ENCODE measurements at regions of chr2 and their contacts with region 1.

Region 1: DNA sequence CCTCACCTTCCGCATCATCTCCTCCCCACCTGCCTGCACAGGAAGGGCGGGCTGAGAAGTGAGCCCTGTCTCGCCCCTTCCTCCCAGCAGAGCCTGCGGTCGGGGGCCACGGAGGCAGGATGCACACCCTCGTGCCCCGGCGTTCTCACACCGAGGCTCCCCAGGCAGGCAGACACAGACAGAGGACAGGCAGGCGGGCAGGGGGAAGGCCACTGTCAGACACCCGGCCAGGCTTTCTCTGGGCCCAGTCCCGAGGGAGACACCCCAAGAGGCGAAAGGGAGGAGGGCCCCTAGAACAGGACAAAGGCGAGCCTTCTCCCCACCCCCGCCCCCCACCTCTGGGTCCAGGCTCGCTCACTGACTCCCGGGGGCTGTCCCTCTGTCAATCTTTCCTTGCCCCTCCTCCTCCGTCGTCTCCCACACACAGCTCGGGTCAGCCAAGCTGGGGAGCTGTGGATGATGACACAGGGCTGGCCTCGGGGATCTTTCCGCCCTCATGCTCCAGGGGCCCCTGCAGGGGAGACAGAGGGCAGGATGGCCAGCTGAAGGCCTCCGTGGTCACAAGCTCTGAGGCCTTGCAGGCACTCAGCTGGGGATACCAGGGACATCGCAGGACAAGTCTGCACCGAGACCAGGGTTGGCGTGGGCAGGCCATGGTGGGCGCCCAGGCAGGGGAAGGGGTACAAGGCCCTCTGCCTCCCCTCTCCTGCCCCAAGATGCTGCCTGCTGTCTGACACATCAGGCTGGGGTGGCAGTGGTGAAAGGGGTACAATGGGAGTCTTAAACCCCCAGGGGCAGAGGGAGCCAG is 24.9 kb downstream of the BIN1 start:
- DNase-seq: peak; percentile 87
- ATAC-seq: peak; percentile 50
- H3K4me3 Mint-ChIP-seq: peak overlapping the region; percentile 82
- H3K27ac Mint-ChIP-seq: peak overlapping the region; percentile 91
- H3K4me1 Mint-ChIP-seq: peaks cover 75% of the 10 kb centered on the region
- H3K27me3 Mint-ChIP-seq: no peaks in the 10 kb centered on the region

Region 2: GRCh38 chr2:126571403-126571802 is 510.6 kb before region 1 on chr2:
- CTCF ChIA-PET with region 1: no interaction called
- POLR2A ChIA-PET with region 1: no interaction called
- intact Hi-C with region 1: no loop called
- DNase-seq: no peak
- ATAC-seq: no peak
- H3K4me3 Mint-ChIP-seq: no peak overlapping the region
- H3K27ac Mint-ChIP-seq: no peak overlapping the region
- H3K4me1 Mint-ChIP-seq: no peaks in the 10 kb centered on the region
- H3K27me3 Mint-ChIP-seq: no peaks in the 10 kb centered on the region

Region 3: DNA sequence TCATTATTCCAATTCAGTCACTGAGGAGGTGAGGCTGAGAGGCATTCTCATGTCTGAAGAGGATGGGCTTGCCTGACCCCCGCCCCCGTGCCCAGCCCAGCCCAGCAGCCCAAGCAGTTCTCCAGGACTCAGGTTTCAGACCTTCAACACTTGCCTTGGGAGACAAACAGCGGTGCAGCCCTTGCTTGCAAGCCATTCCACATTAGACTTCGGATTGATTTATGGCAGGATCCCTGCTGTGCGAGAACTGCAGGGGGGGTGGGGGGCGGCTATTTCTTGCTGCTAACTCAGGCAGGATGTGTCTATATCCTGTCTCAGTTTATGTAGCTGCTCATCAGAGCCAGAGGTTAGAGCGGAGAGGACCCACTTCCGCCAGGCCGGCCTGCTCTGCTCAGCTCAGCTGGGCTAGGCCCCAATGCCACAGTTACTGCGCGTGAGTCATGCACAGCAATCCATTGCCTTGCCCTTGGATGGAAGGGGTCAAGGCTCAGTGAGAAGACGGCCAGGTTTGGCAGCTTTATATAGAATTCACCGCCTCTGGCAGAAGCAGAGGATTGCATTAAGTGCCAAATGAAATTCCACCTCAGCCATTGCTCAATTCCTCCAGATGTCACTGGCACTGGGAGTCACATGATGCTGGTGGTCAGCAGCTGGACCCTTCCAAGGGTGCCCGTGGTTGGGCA is 424.3 kb before region 1 on chr2:
- CTCF ChIA-PET with region 1: no interaction called
- POLR2A ChIA-PET with region 1: no interaction called
- intact Hi-C with region 1: loop called in 1 of 2 experiments (anchors 5 kb)
- DNase-seq: peak; percentile 87
- ATAC-seq: peak; percentile 67
- H3K4me3 Mint-ChIP-seq: peak overlapping the region; percentile 97
- H3K27ac Mint-ChIP-seq: peak overlapping the region; percentile 99
- H3K4me1 Mint-ChIP-seq: peaks cover 59% of the 10 kb centered on the region
- H3K27me3 Mint-ChIP-seq: no peaks in the 10 kb centered on the region

Region 4: DNA sequence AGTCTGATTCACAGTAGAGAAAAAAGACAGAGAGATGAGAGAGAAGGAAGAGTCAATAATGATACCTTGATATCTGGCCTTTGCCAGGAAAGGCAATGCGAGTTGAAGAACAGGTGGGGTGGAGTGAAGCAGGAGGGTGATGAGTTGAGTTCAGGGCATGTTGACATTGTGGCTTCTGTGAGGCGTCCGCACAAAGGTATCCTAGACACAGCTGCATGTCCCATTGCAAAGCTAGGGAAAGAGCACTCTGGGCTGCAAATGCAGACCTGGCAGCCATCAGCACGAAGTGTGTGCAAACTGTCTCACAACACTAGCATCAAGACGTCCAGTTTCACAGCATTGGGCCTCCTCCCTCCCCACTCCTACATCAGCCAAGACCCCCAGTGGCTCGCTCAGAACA is 147.2 kb before region 1 on chr2:
- CTCF ChIA-PET with region 1: no interaction called
- POLR2A ChIA-PET with region 1: no interaction called
- intact Hi-C with region 1: no loop called
- DNase-seq: no peak
- ATAC-seq: no peak
- H3K4me3 Mint-ChIP-seq: no peak overlapping the region
- H3K27ac Mint-ChIP-seq: no peak overlapping the region
- H3K4me1 Mint-ChIP-seq: no peaks in the 10 kb centered on the region
- H3K27me3 Mint-ChIP-seq: peaks cover 13% of the 10 kb centered on the region

Region 5: DNA sequence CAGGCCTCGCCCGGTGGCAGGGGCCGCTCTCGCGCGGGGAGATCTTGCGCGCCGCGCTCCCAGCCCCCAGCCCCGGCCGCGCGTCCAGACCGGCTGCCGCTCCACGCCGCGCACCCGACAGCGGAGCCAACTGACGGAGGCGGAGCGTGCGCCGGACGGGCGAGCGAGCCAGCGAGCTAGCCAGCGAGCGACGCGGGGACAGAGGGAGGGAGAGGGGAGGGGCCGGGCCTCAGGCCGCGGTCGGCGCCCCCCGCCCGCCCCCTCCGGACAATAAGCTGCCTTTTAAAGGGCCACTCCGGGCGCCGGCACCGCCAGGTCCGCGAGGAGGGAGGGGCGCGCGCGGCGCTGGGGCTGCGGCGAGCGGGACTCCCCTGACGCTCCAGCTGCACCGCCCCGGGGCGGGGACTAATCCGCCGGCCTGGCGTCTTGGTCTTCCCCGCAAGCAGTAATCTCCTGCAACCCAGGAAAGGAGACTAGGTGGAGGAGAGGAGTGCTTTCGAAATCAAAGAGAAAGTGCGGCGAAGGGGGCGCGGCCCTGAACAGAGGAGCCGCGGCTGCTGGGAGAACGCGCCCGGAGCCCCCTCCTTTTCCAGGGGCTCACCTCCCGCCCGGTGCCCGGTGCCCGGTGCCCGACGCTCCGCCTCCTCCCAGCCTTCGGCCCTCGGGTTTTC is 25.1 kb after region 1 on chr2 and contains the start of gene BIN1:
- CTCF ChIA-PET with region 1: no interaction called
- POLR2A ChIA-PET with region 1: interaction called, 3 read pairs
- intact Hi-C with region 1: loop called in 1 of 2 experiments (anchors 1 kb)
- DNase-seq: peak; percentile 84
- ATAC-seq: peak; percentile 94
- H3K4me3 Mint-ChIP-seq: peak within 1 kb of the TSS; percentile 69
- H3K27ac Mint-ChIP-seq: peak within 1 kb of the TSS; percentile 31
- H3K4me1 Mint-ChIP-seq: peaks cover 4% of the 10 kb centered on the region
- H3K27me3 Mint-ChIP-seq: peaks cover 19% of the 10 kb centered on the region
- total RNA-seq, gene BIN1: 65.2 to 71.0 TPM

Region 6: DNA sequence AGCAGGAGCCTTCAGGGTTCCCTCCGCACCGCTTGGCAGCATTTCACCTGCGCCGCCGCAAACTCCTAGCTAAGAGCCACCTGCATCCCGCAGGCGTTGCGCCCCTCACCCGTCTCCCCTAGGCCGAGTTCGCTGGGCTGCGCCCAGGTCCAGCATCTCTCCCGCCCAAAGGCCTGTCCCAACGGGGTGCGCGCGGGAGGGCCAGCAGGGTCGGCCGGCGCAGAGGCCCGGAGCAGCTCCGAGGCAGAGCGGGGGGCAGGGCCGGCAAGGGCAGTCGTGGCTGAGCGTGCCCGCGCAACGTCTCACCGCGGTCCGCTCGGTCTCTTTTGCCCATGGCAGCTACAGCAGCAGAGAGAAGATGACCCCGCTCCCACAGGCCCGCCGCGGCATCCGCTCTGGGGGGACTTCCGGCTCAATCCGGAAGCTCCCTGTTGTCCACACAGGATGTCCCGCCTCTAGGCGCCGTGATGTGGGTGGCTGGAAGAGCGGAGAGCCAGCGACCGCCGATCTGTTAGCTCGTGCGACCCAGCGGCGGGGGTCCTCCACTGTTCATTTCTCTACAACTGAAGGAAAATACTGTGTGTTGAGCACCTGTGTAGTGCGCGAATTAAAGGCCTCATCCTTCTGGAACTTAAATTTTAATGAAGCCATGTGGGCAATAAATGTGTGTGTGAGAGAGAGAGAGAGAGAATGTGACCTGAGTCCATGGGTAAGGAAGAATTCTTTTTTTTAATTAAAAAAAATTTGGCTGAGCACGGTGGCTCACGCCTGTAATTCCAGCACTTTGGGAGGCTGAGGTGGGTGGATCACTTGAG is 211.9 kb after region 1 on chr2 and contains the start of gene ERCC3:
- CTCF ChIA-PET with region 1: interaction called, 3 read pairs
- POLR2A ChIA-PET with region 1: no interaction called
- intact Hi-C with region 1: loop called in 1 of 2 experiments (anchors 5 kb)
- DNase-seq: peak; percentile 90
- ATAC-seq: peak; percentile 98
- H3K4me3 Mint-ChIP-seq: peak within 1 kb of the TSS; percentile 98
- H3K27ac Mint-ChIP-seq: peak within 1 kb of the TSS; percentile 100
- H3K4me1 Mint-ChIP-seq: peaks cover 20% of the 10 kb centered on the region
- H3K27me3 Mint-ChIP-seq: no peaks in the 10 kb centered on the region
- total RNA-seq, gene ERCC3: 49.5 to 49.8 TPM

Region 7: GRCh38 chr2:127408004-127408806 is 326.2 kb after region 1 on chr2:
- CTCF ChIA-PET with region 1: no interaction called
- POLR2A ChIA-PET with region 1: no interaction called
- intact Hi-C with region 1: loop called in 1 of 2 experiments (anchors 5 kb)
- DNase-seq: peak; percentile 94
- ATAC-seq: peak; percentile 87
- H3K4me3 Mint-ChIP-seq: no peak overlapping the region
- H3K27ac Mint-ChIP-seq: peak overlapping the region; percentile 67
- H3K4me1 Mint-ChIP-seq: peaks cover 32% of the 10 kb centered on the region
- H3K27me3 Mint-ChIP-seq: peaks cover 6% of the 10 kb centered on the region

Measured in activated CD4-positive, alpha-beta T cell treated with anti-CD3 and anti-CD28 coated beads for 36 hours (primary cell).